Astrocyte of the cerebellum (primary cell): ENCODE measurements at regions of chr11 and their contacts with region 1.

Region 1: GRCh38 chr11:11641581-11641980 is 19.8 kb upstream of the GALNT18 start:
- DNase-seq: no peak
- H3K4me3 ChIP-seq: no peak overlapping the region
- CTCF ChIP-seq: no peak

Region 2: GRCh38 chr11:11592146-11592684 is 49.4 kb before region 1 on chr11:
- in situ Hi-C with region 1: loop called (anchors 5 kb)
- DNase-seq: no peak
- H3K4me3 ChIP-seq: no peak overlapping the region
- CTCF ChIP-seq: no peak

Region 3: DNA sequence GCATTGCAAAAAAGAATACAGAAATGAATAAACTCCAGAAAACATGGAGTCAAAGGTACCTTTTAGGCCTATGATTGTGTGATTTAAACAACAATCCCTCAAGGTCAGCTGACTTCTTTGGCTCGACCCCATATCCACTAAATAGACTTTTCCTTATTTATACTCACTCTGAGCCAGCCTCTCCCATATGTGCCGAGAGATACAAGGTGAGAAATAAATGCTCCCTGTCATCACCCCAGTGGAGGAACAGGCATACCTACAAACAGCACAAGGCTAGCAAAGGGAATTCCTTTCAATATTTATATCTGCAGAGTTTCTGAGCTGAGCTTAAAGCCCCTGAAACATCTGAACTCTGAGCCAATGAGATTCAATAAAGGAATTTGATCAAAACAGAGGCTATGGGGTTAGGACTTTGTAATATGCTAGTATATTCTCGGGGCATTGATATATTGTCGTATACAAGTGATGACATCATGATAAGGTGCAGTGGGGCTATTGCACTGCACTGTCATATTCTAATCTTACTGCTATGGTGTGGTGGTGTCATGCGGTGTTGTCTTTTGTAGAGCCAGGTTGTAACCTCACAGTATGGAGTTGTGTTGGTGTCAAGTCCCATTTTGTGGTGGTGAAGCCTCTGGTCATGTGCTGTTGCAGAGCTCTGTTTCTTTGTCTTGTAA is 36.2 kb after region 1 on chr11:
- in situ Hi-C with region 1: no loop called
- DNase-seq: no peak
- H3K4me3 ChIP-seq: no peak overlapping the region
- CTCF ChIP-seq: no peak